ENCODE measurements at regions of chr1 and their contacts with region 1.

Region 1: DNA sequence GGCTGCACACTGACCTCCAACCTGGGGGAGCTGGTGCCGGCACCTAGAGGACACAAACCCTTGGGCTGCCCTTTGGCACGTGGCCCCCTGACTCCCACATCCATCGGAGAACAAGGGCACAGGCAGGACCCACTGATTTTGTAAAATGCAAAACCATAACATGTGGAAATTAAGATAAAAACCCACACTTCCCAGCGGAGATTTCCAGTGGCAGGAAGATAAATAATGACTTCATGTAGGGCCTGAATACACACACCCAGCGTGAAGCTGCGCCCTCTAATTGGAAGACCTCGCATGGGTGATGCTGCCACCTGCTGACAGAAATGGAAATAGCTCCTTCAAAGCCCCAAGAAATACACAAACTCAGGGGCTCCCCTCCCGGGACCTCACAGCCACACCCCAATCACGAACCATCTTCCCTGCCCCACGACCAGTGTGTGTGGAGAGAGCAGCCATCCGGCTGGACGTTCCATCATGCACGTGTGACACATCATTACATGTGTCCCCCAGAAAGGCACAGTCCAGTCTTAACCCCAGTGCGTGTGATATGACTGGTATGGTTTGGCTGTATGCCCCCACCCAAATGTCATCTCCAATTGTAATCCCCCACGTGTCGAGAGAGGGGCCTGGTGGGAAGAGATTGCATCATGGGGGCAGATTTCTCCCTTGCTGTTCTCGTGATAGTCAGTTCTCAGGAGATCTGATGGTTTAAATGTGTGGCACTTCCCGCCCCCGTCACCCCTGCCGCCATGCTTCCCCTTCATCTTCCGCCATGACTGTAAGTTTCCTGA is 5.7 kb upstream of the TPRG1L start:
- DNase-seq: peak in 4 of 5 donors; percentile 65 to 74 (median 67)
- ATAC-seq: peak in 3 of 4 donors; percentile 75 to 81 (median 75)
- H3K4me3 ChIP-seq: no peak overlapping the region
- H3K27ac ChIP-seq: no peak overlapping the region
- H3K4me1 ChIP-seq: peaks cover 0 to 30% (median 20%) of the 10 kb centered on the region in 12 donors
- H3K27me3 ChIP-seq: peaks cover 0 to 3% (median 0%) of the 10 kb centered on the region in 9 donors
- CTCF ChIP-seq: peak; percentile 78 to 91 (median 84)
- POLR2A ChIP-seq: no peak

Region 2: DNA sequence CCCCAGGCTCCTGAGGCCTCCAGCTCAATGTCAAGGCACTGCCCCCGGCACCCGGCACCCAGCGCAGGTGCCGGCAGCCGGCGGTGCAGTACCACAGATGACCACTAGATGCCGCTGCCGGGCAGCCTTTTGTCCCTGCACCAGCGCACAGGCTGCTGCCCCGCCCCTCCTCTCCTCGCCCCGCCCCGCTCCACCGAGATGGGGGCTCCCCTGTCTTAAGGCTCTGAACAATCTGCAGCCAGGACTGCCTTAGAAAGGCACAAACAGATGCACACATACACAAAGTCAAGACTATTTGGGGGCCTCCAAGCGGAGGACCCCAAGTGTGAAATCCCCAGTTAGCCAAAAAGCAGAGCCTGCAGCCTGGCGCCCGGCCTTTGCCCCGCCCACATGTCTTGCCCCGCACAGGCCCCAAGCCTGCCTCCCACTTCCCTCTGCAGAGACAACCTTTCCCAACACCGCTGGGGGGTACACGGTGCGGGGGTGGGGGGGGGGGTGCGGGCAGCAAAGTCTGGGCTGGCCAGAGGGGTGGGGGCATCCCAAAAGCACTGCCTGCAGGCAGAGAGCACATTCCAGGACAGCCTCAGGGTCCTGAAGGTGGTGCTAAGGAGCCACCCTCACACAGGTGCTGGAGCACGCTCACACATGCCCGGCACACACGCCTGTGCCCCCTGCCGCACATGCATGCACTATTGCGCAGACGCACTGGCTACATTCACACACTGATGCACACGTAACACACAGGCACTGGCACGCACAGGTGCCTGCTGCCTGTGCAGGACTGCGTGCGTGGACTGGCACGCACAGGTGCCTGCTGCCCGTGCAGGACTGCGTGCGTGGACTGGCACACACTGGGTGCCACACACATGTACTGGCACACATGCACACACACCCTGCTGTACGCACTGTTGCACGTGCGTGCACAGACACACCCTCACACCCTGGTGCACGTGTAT is 127.5 kb before region 1 on chr1:
- intact Hi-C with region 1: loop called (anchors 1 to 2 kb)
- DNase-seq: peak; percentile 71 to 90 (median 76)
- ATAC-seq: peak; percentile 60 to 87 (median 82)
- H3K4me3 ChIP-seq: peak overlapping the region in 1 of 12 donors; percentile 22
- H3K27ac ChIP-seq: no peak overlapping the region
- H3K4me1 ChIP-seq: peaks cover 0 to 8% (median 0%) of the 10 kb centered on the region in 12 donors
- H3K27me3 ChIP-seq: peaks cover 0 to under 1% (median 0%) of the 10 kb centered on the region in 9 donors
- CTCF ChIP-seq: peak; percentile 99 to 100 (median 100)
- POLR2A ChIP-seq: no peak

Region 3: DNA sequence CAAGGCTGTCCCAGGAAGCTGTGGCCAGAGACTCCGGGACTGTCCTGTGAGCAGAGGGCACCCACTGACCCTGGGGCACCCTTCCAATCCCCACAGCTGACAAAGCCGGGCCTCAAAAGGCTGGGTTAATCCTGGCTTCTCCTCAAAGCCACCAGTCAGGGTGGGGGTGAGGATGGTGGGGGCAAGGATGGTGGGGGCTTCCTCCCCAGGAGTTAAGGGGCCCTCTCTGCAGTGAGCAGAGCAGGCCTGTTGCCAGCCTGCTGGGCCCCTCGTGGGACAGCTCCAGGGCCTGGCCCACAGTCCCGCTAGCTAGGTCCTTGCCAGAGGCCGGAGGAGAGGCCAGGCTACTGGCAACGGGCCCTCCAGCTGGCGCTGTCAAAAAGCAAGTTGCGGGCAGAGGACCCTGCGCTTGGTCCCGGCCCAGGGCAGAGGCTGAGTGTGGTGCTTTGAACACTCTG is 95.2 kb after region 1 on chr1:
- intact Hi-C with region 1: no loop called
- DNase-seq: peak in 1 of 5 donors; percentile 72
- ATAC-seq: peak; percentile 33 to 57 (median 44)
- H3K4me3 ChIP-seq: no peak overlapping the region
- H3K27ac ChIP-seq: peak overlapping the region in 2 of 12 donors; percentile 14 to 47
- H3K4me1 ChIP-seq: peaks cover 0 to 44% (median 11%) of the 10 kb centered on the region in 12 donors
- H3K27me3 ChIP-seq: peaks cover 0 to 42% (median 8%) of the 10 kb centered on the region in 9 donors
- CTCF ChIP-seq: no peak
- POLR2A ChIP-seq: no peak